SK-N-SH (cell line): ENCODE measurements at regions of chr18 and their contacts with region 1.

Region 1: DNA sequence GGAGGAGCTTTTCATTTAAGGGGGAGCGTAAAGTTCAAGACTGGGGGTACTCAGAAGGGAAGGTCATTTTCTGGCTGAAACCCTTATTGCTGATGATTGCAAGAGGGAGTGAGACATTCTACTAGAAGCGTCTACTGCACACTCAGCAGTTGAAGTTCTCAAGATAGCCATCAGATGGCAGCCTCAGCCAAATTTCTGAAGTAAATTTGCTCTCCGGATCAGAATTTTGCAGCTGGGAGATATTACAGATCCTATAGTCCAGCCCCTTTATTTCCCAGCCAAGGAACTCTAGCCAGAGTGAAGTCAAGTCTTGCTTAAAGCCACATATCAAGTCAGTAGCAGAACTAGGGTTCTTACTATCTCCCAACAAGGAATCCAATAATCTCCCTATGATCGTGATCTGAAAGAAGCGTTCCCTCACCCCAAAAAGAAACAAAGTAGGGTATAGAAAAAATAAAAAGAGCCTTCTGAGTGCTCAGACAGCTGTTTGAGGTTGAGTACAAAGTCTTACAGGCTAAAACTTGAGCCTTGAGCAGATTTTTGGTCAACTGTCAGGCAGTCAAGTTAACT is 24.0 kb downstream of the RAX start:
- DNase-seq: peak; percentile 76
- H3K4me3 ChIP-seq: peak overlapping the region in 1 of 2 experiments; percentile 4; a peak in 1 of 4 replicates
- H3K27ac ChIP-seq: no peak overlapping the region
- H3K4me1 ChIP-seq: 0 out of 4 replicates have a peak, but pooled peaks cover 0 to 4% of the 10 kb centered on the region in 2 experiments
- H3K27me3 ChIP-seq: peaks cover 17% of the 10 kb centered on the region; the same call in 1 of the 2 replicates
- CTCF ChIP-seq: peak; percentile 78
- EP300 ChIP-seq: no peak
- RAD21 ChIP-seq: peak; percentile 93

Region 2: DNA sequence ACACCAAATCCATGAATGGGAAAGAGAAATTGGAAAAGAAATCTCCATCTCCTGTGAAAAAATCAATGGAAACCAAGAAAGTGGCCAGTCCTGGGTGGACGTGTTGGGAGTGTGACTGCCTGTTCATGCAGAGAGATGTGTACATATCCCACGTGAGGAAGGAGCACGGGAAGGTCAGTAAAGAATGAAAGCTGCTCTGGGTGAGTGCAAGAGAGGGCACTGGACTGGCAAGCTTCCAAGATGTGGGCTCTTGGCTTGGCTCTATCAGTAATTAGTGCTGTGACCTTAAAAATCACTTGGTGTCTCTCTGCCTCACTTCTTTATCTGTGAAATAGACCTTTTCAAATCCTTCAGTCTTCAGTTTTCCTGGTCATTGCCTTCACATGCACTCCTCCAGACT is 295.7 kb before region 1 on chr18:
- CTCF ChIA-PET with region 1: no interaction called
- POLR2A ChIA-PET with region 1: no interaction called
- DNase-seq: peak; percentile 50
- H3K4me3 ChIP-seq: no peak overlapping the region
- H3K27ac ChIP-seq: peak overlapping the region; percentile 5 to 36; a peak in 1 of 4 replicates
- H3K4me1 ChIP-seq: peaks cover 8 to 9% of the 10 kb centered on the region in 2 experiments; a peak in 3 of 4 replicates
- H3K27me3 ChIP-seq: no peaks in the 10 kb centered on the region
- CTCF ChIP-seq: no peak
- EP300 ChIP-seq: no peak
- RAD21 ChIP-seq: no peak

Region 3: DNA sequence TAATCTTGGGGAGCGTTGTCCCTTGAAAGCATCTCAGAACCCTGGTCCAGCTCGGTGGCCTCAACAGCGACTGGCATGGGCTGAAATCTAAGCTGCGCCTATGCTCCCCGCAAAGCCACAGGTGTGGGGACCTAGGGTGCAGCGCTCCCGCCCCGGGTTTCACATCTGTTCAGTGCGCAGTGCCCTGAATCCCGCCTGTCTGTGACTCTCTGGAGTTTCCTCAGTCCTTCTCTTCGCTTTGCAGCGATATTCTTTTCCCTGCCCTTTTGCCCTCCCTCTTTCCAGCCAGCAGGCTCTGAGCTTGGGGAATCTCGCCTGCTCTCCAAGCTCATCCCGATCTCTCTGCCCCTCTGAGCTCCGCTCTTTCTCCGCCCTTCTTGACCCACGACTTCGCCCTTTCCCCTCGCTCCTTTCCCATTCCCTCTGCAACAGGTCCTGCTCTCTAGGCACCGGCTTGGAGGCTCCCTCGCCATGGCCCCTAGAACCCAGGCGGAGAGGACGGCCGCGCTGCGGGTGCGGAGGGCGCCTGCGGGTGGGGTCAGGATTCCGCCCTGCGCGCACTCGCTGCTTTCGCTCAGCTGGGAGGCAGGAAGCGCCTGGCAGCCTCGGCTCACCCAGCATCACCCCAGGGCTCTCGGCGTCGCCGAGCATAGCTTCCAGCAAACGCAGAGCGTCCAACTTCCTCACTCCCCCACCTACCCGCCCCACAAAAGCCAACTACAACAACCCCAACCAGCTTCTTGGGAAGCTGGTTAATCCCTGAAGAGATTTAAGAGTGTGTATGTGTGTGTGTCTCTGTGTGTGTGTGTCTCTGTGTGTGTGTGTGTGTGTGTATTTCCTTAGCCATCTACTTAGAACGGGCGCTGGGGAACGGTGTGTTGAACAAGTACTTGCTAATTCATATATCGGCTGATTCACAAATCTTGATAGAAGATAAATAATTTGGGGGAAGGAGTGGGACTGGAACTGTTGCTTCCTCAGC is 28.2 kb before region 1 on chr18:
- CTCF ChIA-PET with region 1: interaction called, 11 read pairs
- POLR2A ChIA-PET with region 1: no interaction called
- DNase-seq: peak; percentile 56
- H3K4me3 ChIP-seq: peak overlapping the region; percentile 32 to 65
- H3K27ac ChIP-seq: no peak overlapping the region
- H3K4me1 ChIP-seq: peaks cover 4 to 5% of the 10 kb centered on the region in 2 experiments; a peak in 2 of 4 replicates
- H3K27me3 ChIP-seq: peaks cover 47% of the 10 kb centered on the region
- CTCF ChIP-seq: no peak
- EP300 ChIP-seq: no peak
- RAD21 ChIP-seq: no peak

Region 4: DNA sequence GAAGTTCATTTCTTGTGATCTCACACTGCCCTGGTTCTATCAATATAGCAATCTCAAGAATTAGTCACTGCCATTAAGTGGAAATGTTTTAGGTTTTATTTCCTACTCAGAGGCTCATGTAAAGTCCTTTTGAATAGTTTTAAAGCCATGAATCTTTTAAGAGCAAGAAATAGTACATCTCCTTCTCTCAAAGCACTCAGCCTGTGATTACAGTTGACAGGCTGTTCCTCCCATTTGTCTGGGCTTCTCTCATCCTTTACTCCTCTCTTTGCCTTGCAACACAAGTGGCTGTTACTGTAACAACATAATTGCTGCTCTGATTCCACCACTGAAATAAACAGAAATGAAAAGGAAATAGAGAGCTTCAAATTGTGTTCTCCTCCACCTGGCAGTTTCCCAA is 10.9 kb before region 1 on chr18:
- CTCF ChIA-PET with region 1: interaction called, 25 read pairs
- POLR2A ChIA-PET with region 1: no interaction called
- DNase-seq: no peak
- H3K4me3 ChIP-seq: no peak overlapping the region
- H3K27ac ChIP-seq: peak overlapping the region in 1 of 2 experiments; percentile 68; a peak in 2 of 4 replicates
- H3K4me1 ChIP-seq: 0 out of 4 replicates have a peak, but pooled peaks cover 0 to 5% of the 10 kb centered on the region in 2 experiments
- H3K27me3 ChIP-seq: no peaks in the 10 kb centered on the region
- CTCF ChIP-seq: no peak
- EP300 ChIP-seq: no peak
- RAD21 ChIP-seq: no peak

Region 5: GRCh38 chr18:59279193-59279592 is 29.9 kb after region 1 on chr18:
- CTCF ChIA-PET with region 1: interaction called, 25 read pairs
- POLR2A ChIA-PET with region 1: no interaction called
- DNase-seq: no peak
- H3K4me3 ChIP-seq: no peak overlapping the region
- H3K27ac ChIP-seq: no peak overlapping the region
- H3K4me1 ChIP-seq: no peaks in the 10 kb centered on the region
- H3K27me3 ChIP-seq: peaks cover 57% of the 10 kb centered on the region
- CTCF ChIP-seq: no peak
- EP300 ChIP-seq: no peak
- RAD21 ChIP-seq: no peak

Region 6: GRCh38 chr18:59300676-59301285 is 51.5 kb after region 1 on chr18:
- CTCF ChIA-PET with region 1: interaction called, 92 read pairs
- POLR2A ChIA-PET with region 1: no interaction called
- DNase-seq: no peak
- H3K4me3 ChIP-seq: no peak overlapping the region
- H3K27ac ChIP-seq: no peak overlapping the region
- H3K4me1 ChIP-seq: peaks cover 0 to 4% of the 10 kb centered on the region in 2 experiments; a peak in 1 of 4 replicates
- H3K27me3 ChIP-seq: peaks cover 32% of the 10 kb centered on the region; the same call in 1 of the 2 replicates
- CTCF ChIP-seq: no peak
- EP300 ChIP-seq: no peak
- RAD21 ChIP-seq: no peak

Region 7: DNA sequence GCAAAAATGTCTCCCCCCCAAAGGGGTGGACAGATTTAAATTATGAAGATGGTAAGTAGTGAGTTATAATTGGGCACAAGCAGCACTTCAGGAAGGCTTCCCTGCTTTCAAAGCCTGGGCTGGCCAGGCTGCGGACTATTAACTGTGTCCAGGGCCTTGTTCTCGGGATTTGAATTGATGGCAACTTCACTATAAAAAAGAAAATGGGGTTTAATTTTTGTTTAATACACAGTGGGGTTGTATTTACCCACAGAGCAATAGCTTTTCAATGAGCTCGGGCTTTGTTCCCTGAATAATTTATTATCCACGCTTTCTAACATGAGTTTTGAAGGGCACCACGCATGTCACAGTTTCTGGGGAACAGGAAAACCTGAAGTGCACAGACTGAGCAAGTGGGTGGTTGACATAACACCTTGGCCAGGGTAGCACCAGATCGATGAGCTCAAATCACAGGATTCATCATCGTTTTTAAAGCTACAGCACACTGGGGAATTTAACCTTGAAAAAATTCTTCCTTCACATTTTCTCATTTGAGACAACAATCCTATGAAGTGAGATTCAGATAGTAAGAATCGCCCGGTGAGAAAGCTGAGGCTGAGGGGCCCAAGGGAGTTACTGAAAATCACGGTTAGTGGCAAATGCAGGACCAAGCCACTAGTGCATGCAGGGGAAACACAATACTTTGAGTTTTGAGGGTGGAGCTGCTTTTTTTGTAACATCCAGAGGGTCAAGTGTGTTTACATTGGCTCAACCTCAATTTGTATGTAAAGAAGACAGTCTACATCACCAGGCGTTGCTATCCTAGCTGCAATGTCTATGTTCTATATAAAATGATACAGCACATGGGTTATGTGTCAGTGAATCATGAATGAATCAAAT is 138.6 kb after region 1 on chr18:
- CTCF ChIA-PET with region 1: interaction called, 10 read pairs
- POLR2A ChIA-PET with region 1: no interaction called
- DNase-seq: no peak
- H3K4me3 ChIP-seq: no peak overlapping the region
- H3K27ac ChIP-seq: no peak overlapping the region
- H3K4me1 ChIP-seq: no peaks in the 10 kb centered on the region; a peak in 2 of 4 replicates
- H3K27me3 ChIP-seq: 0 out of 2 replicates have a peak, but pooled peaks cover 6% of the 10 kb centered on the region
- CTCF ChIP-seq: no peak
- EP300 ChIP-seq: no peak
- RAD21 ChIP-seq: no peak

Region 8: DNA sequence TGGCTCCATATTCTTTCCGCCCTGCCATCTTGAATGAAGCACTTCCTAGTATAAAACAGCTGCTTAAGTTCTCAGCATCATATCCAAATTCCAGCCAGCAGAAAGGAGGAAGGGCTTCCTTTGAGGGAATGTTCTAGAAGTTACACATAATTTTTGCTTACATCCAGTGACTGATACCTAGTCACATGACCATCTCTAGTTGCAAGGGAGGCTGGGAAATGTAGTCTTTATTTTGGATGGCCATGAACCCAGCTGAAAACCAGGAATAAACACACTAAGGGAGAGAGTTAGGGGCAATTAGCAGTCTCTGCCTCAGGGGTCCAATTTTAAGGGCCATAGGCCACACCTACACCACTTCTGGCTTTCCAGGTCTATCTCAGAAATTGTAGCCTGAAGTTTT is 167.5 kb after region 1 on chr18:
- CTCF ChIA-PET with region 1: interaction called, 10 read pairs
- POLR2A ChIA-PET with region 1: no interaction called
- DNase-seq: no peak
- H3K4me3 ChIP-seq: no peak overlapping the region
- H3K27ac ChIP-seq: no peak overlapping the region
- H3K4me1 ChIP-seq: no peaks in the 10 kb centered on the region; a peak in 1 of 4 replicates
- H3K27me3 ChIP-seq: no peaks in the 10 kb centered on the region
- CTCF ChIP-seq: no peak
- EP300 ChIP-seq: no peak
- RAD21 ChIP-seq: no peak